Right cardiac atrium (tissue), 5 donors: ENCODE measurements at regions of chr7 and their contacts with region 1.

Region 1: DNA sequence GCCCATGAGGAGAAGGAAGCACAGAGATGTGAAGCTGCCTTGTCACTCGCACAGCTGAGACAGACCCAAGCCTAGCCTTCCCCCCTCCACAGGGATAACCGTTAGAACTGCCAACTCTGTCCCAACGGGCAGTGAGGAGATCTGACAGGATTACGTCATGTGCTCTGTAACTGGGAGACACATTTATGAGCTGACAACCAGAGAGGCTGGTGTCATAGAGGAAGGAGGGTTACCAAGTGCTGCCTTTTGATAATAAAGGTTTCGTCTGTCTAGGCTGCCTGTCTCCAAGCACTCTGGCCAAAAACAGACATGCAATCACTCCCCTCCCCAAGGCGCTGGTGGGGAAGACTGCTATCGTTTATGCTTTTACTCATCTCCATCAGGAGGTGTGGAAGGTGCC is 165.9 kb downstream of the PLXNA4 start:
- DNase-seq: peak; percentile 68 to 75 (median 72)
- ATAC-seq: peak; percentile 93 to 95
- H3K4me3 ChIP-seq: no peak overlapping the region
- H3K27ac ChIP-seq: peak overlapping the region; percentile 47
- H3K4me1 ChIP-seq: peaks cover 15% of the 10 kb centered on the region
- H3K27me3 ChIP-seq: no peaks in the 10 kb centered on the region

Region 2: GRCh38 chr7:132386201-132386681 is 24.1 kb before region 1 on chr7:
- intact Hi-C with region 1: no loop called
- DNase-seq: peak; percentile 79 to 92 (median 86)
- ATAC-seq: peak; percentile 94 to 95
- H3K4me3 ChIP-seq: no peak overlapping the region
- H3K27ac ChIP-seq: no peak overlapping the region
- H3K4me1 ChIP-seq: peaks cover 13% of the 10 kb centered on the region
- H3K27me3 ChIP-seq: no peaks in the 10 kb centered on the region

Region 3: GRCh38 chr7:132464746-132465145 is 54.4 kb after region 1 on chr7:
- intact Hi-C with region 1: loop called in 1 of 4 experiments (anchors 10 kb)
- DNase-seq: peak; percentile 66 to 75 (median 67)
- ATAC-seq: peak; percentile 82 to 93
- H3K4me3 ChIP-seq: no peak overlapping the region
- H3K27ac ChIP-seq: no peak overlapping the region
- H3K4me1 ChIP-seq: peaks cover 10% of the 10 kb centered on the region
- H3K27me3 ChIP-seq: no peaks in the 10 kb centered on the region